Posterior vena cava (tissue), 2 donors: ENCODE measurements at regions of chr1 and their contacts with region 1.

Region 1: GRCh38 chr1:68673766-68674165 is 176.9 kb upstream of the DEPDC1 start:
- DNase-seq: no peak

Region 2: GRCh38 chr1:68087184-68087583 is 586.6 kb before region 1 on chr1:
- intact Hi-C with region 1: loop called in 1 of 2 experiments (anchors 5 kb)
- DNase-seq: no peak

Region 3: DNA sequence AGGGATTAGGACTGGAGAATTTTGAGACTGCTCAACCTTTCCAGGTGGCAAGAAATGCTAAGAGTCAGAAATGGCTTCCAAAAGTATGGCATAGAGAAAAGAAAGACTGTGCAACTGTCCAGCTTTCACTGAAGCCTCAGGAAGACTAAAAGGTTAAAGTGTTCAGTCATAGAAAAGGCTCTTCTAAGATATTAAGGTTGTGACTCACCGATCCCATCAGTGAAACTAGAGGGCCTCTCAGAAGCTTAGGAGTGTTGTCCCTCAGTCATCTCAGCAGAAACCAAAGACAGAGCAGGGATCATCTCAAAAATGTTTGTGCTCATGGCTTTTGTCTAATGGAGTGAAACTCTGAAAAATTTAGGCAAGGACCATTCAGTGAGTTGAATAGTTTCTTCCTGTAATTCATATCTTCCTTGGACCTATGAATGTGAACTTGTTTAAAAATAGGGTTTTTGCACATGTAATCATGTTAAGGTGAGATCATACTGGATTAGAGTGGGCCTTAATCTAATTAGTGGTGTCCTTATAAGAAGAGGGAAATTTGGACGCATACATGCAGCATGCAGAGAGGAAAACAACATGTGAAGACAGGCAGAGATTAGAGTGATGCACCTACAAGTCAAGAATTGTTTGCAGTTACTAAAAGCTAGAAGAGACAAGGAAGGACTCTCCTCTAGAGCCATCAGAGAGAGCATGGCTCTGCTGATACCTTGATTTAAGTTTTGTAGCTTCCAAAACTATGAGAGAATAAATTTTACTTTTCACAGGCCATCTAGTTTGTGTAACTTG is 295.3 kb before region 1 on chr1:
- intact Hi-C with region 1: no loop called
- DNase-seq: no peak

Region 4: GRCh38 chr1:68745011-68745410 is 71.2 kb after region 1 on chr1:
- intact Hi-C with region 1: no loop called
- DNase-seq: no peak